GM12878 (cell line): ENCODE measurements at regions of chr4 and their contacts with region 1.

Region 1: GRCh38 chr4:94304365-94304971 is 38.2 kb downstream of the HPGDS start:
- DNase-seq: no peak
- ATAC-seq: peak; percentile 83
- H3K4me3 ChIP-seq: no peak overlapping the region
- H3K27ac ChIP-seq: no peak overlapping the region
- H3K4me1 ChIP-seq: no peaks in the 10 kb centered on the region
- H3K27me3 ChIP-seq: no peaks in the 10 kb centered on the region
- CTCF ChIP-seq: peak; percentile 43 to 58 (median 51); a peak in 4 of 6 replicates
- EP300 ChIP-seq: no peak
- POLR2A ChIP-seq: no peak
- RAD21 ChIP-seq: peak; percentile 69

Region 2: GRCh38 chr4:94214703-94215319 is 89.7 kb before region 1 on chr4:
- CTCF ChIA-PET with region 1: no interaction called
- POLR2A ChIA-PET with region 1: no interaction called
- RAD21 ChIA-PET with region 1: no interaction called
- SMC1A ChIA-PET with region 1: no interaction called
- in situ Hi-C with region 1: no loop called
- intact Hi-C with region 1: no loop called
- DNase-seq: no peak
- ATAC-seq: peak; percentile 81
- H3K4me3 ChIP-seq: no peak overlapping the region
- H3K27ac ChIP-seq: no peak overlapping the region
- H3K4me1 ChIP-seq: no peaks in the 10 kb centered on the region
- H3K27me3 ChIP-seq: no peaks in the 10 kb centered on the region
- CTCF ChIP-seq: no peak
- EP300 ChIP-seq: no peak
- POLR2A ChIP-seq: no peak
- RAD21 ChIP-seq: no peak

Region 3: GRCh38 chr4:94595879-94596483 is 291.5 kb after region 1 on chr4:
- CTCF ChIA-PET with region 1: no interaction called
- POLR2A ChIA-PET with region 1: no interaction called
- RAD21 ChIA-PET with region 1: no interaction called
- SMC1A ChIA-PET with region 1: interaction called, 3 read pairs
- in situ Hi-C with region 1: no loop called
- intact Hi-C with region 1: loop called (anchors 2 kb)
- DNase-seq: peak; percentile 8
- ATAC-seq: peak; percentile 78
- H3K4me3 ChIP-seq: no peak overlapping the region
- H3K27ac ChIP-seq: no peak overlapping the region
- H3K4me1 ChIP-seq: no peaks in the 10 kb centered on the region
- H3K27me3 ChIP-seq: no peaks in the 10 kb centered on the region
- CTCF ChIP-seq: peak; percentile 45 to 76 (median 53); a peak in 4 of 6 replicates
- EP300 ChIP-seq: no peak
- POLR2A ChIP-seq: no peak
- RAD21 ChIP-seq: peak; percentile 89